Esophagus squamous epithelium (tissue), 5 donors: ENCODE measurements at regions of chr11 and their contacts with region 1.

Region 1: GRCh38 chr11:118659314-118659952 is 20.0 kb downstream of the TREH start:
- DNase-seq: no peak
- H3K4me3 ChIP-seq: peak overlapping the region in 2 of 4 donors; percentile 2 to 19
- H3K27ac ChIP-seq: peak overlapping the region in 3 of 4 donors; percentile 46 to 64 (median 58)
- H3K4me1 ChIP-seq: peaks cover 13 to 43% (median 17%) of the 10 kb centered on the region in 3 donors
- H3K27me3 ChIP-seq: no peaks in the 10 kb centered on the region
- CTCF ChIP-seq: peak; percentile 93 to 98 (median 94)
- POLR2A ChIP-seq: no peak

Region 2: GRCh38 chr11:118547132-118547531 is 112.3 kb before region 1 on chr11:
- intact Hi-C with region 1: no loop called
- DNase-seq: no peak
- H3K4me3 ChIP-seq: no peak overlapping the region
- H3K27ac ChIP-seq: no peak overlapping the region
- H3K4me1 ChIP-seq: no peaks in the 10 kb centered on the region
- H3K27me3 ChIP-seq: no peaks in the 10 kb centered on the region
- CTCF ChIP-seq: no peak
- POLR2A ChIP-seq: no peak

Region 3: GRCh38 chr11:118592616-118593367 is 66.6 kb before region 1 on chr11:
- intact Hi-C with region 1: loop called (anchors 10 kb)
- DNase-seq: no peak
- H3K4me3 ChIP-seq: no peak overlapping the region
- H3K27ac ChIP-seq: peak overlapping the region in 3 of 4 donors; percentile 30 to 43 (median 40)
- H3K4me1 ChIP-seq: peaks cover 0 to 14% (median 0%) of the 10 kb centered on the region in 3 donors
- H3K27me3 ChIP-seq: no peaks in the 10 kb centered on the region
- CTCF ChIP-seq: no peak
- POLR2A ChIP-seq: no peak

Region 4: DNA sequence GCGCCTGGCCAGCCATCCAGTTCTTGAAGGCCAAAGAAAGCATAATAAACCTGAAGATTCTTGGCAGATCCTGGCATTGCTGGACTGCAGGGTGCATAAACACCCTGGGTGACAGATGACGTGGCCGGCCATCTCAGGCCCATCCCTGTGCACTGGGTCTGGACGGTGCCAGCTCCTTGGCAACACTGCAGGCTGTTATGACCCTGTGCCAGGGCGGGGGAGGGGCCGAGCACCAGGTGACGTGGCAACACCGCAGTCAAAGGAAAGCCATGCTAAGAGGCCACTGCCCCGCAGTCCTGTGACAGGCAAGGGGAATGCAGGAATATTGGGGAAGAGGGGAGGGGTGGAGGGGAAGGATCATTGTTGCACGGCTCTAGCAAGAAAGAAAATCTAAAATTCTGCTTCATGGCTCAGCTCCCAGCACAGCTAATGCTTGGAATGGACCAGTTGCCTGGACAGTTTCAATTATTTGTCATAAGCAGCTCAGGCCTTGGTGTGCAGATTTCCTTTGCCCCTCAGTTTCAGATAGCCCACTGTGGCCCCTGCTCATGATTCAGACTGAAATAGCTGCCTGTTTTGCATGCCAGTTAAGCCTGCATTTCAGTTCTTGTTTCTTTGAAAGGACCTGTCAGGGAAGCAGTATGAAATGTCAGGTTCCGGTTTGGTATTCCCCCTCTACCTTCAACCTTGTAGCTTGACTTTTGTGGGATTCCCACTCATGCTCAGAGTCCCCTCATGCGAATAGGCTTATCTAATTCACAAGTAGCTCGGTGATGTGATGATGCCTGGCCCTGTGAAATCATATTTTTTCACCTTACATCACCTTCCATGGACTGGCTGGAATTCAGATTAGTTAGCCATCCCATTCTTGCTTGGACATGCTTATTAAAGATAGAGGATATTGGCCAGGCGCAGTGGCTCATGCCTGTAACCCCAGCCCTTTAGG is 161.3 kb after region 1 on chr11:
- intact Hi-C with region 1: no loop called
- DNase-seq: no peak
- H3K4me3 ChIP-seq: no peak overlapping the region
- H3K27ac ChIP-seq: peak overlapping the region in 3 of 4 donors; percentile 38 to 72 (median 42)
- H3K4me1 ChIP-seq: peaks cover 0 to 14% (median 8%) of the 10 kb centered on the region in 3 donors
- H3K27me3 ChIP-seq: no peaks in the 10 kb centered on the region
- CTCF ChIP-seq: no peak
- POLR2A ChIP-seq: no peak

Region 5: DNA sequence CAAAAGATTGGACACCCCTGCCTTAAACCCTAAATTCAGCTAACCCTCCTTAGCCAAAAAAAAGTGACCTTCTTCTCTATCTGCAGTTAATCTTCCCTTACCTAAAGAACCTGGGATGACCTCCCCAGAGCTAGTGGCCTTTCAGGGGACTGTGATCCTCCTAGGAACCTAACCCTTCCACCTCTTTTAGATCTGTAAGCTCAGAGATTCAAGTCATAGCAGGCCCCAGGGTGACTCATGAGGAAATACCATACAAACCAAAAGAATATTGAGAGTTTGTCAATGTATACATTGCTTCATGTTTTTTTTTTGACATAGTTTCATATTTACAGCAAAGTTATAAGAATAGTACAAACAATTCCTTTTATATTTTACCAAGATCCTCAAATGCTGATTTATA is 185.9 kb after region 1 on chr11:
- intact Hi-C with region 1: no loop called
- DNase-seq: no peak
- H3K4me3 ChIP-seq: no peak overlapping the region
- H3K27ac ChIP-seq: peak overlapping the region in 3 of 4 donors; percentile 68 to 82 (median 74)
- H3K4me1 ChIP-seq: peaks cover 0 to 59% (median 13%) of the 10 kb centered on the region in 3 donors
- H3K27me3 ChIP-seq: no peaks in the 10 kb centered on the region
- CTCF ChIP-seq: no peak
- POLR2A ChIP-seq: no peak